IMR-90 (cell line): ENCODE measurements at regions of chr4 and their contacts with region 1.

Region 1: GRCh38 chr4:121370729-121371325 is 10.0 kb downstream of the QRFPR start:
- DNase-seq: peak; percentile 33
- ATAC-seq: peak; percentile 84
- H3K4me3 ChIP-seq: no peak overlapping the region
- H3K27ac ChIP-seq: no peak overlapping the region
- H3K4me1 ChIP-seq: no peaks in the 10 kb centered on the region
- H3K27me3 ChIP-seq: no peaks in the 10 kb centered on the region; the same call in 1 of the 2 replicates
- CTCF ChIP-seq: peak; percentile 64
- POLR2A ChIP-seq: no peak
- RAD21 ChIP-seq: peak; percentile 50

Region 2: DNA sequence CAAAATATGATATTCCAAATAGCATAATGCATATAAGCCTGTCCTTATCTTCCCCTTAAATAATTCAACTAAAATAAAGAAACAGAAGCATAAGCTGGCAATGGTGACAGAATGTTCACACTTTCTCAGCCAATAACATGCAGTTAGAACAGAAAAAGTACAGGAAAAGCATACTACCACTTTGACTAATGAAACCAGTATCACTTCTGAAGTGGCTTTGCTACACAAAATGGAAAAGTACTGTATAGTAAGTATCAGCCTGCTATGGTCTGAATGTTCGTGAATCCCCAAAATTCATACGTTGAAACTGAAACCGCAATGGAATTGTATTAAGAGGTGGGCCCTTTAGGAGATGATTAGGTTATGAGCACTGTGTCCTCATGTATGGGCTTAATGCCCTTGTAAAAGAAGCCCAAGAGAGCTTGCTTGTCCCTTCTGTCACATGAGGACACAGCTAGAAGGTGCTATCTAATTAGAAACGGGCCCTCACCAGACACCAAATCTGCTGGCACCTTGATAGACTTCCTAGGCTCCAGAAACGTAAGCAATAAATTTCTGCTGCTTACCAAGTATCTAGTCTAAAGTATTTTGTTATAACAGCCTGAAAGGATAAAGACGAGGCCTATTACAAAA is 550.9 kb before region 1 on chr4:
- CTCF ChIA-PET with region 1: no interaction called
- POLR2A ChIA-PET with region 1: no interaction called
- dilution Hi-C with region 1: no loop called
- in situ Hi-C with region 1: no loop called
- intact Hi-C with region 1: no loop called
- DNase-seq: no peak
- ATAC-seq: no peak
- H3K4me3 ChIP-seq: no peak overlapping the region
- H3K27ac ChIP-seq: no peak overlapping the region
- H3K4me1 ChIP-seq: no peaks in the 10 kb centered on the region
- H3K27me3 ChIP-seq: no peaks in the 10 kb centered on the region
- CTCF ChIP-seq: no peak
- POLR2A ChIP-seq: no peak
- RAD21 ChIP-seq: no peak

Region 3: DNA sequence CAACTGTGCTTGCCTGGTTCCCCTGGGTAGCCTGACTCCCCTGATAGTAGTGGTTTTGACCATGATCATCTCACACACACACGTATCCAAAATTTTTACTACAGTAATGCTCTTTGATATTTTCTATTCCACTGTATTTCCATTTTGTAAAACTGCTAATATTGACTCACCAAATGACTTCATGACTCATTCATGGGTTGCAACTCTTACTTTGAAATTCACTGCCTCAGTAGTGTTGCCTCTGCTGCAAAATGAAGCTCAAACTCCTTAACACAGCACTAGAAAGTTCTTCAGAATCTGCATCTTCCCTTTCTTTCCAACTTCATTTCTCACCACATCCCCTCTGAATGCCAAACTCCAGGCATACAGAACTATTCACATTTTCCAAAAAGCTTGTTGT is 10.3 kb before region 1 on chr4:
- CTCF ChIA-PET with region 1: interaction called, 8 read pairs
- POLR2A ChIA-PET with region 1: no interaction called
- dilution Hi-C with region 1: no loop called
- in situ Hi-C with region 1: no loop called
- intact Hi-C with region 1: loop called (anchors 1 kb)
- DNase-seq: peak; percentile 2
- ATAC-seq: no peak
- H3K4me3 ChIP-seq: no peak overlapping the region
- H3K27ac ChIP-seq: no peak overlapping the region
- H3K4me1 ChIP-seq: no peaks in the 10 kb centered on the region
- H3K27me3 ChIP-seq: no peaks in the 10 kb centered on the region
- CTCF ChIP-seq: no peak
- POLR2A ChIP-seq: no peak
- RAD21 ChIP-seq: no peak

Region 4: DNA sequence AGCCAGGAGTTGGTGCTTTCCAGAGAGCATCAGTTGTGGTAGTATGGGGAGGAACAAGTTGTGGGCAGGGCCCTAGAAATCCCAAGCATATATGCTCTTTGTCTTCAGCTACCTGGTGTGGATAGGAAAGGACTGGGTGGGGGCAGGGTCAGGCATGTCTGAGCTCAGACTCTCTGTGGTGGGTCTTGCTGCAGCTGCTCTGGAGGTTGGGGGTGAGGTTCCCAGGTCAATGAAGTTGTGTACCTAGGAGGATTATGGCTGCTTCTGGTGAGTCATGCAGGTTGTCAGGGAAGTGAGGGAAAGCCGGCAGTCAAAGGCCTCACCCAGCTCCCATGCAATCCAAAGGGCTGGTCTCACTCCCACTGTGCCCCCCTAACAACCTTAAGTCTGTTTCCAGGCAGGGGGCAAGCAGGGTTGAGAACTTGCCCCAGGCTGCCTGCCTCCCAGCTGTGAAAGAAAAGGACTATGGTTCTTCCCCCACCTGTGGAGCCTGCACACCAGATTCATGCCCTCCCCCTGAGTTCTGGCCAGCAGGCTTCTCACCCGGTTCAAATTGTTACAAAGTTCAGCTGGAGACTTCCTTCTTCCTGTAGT is 40.4 kb after region 1 on chr4:
- CTCF ChIA-PET with region 1: no interaction called
- POLR2A ChIA-PET with region 1: no interaction called
- dilution Hi-C with region 1: no loop called
- in situ Hi-C with region 1: no loop called
- intact Hi-C with region 1: no loop called
- DNase-seq: no peak
- ATAC-seq: no peak
- H3K4me3 ChIP-seq: no peak overlapping the region
- H3K27ac ChIP-seq: no peak overlapping the region
- H3K4me1 ChIP-seq: no peaks in the 10 kb centered on the region
- H3K27me3 ChIP-seq: no peaks in the 10 kb centered on the region
- CTCF ChIP-seq: no peak
- POLR2A ChIP-seq: no peak
- RAD21 ChIP-seq: no peak